Astrocyte of the cerebellum (primary cell): ENCODE measurements at regions of chr22 and their contacts with region 1.

Region 1: DNA sequence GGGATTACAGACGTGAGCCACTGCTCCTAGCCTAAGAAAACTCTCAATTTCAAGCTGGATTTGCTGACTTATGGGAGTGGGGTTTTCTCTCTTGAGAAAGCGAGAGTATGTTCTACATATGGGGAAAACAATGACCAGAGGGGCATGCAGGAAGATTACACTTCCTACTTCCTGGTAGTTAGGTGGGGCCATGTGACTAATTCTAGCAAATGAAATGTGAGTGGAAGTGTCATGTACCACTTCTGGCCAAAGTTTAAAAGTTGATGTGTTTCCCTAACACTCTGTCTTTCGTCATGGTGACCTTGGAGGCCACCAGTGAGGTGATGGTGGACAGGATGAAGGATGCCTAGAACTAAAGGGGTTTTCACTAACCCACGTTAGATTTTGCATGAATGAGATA is 50.5 kb downstream of the PARVG start:
- DNase-seq: no peak
- H3K4me3 ChIP-seq: no peak overlapping the region
- CTCF ChIP-seq: no peak

Region 2: DNA sequence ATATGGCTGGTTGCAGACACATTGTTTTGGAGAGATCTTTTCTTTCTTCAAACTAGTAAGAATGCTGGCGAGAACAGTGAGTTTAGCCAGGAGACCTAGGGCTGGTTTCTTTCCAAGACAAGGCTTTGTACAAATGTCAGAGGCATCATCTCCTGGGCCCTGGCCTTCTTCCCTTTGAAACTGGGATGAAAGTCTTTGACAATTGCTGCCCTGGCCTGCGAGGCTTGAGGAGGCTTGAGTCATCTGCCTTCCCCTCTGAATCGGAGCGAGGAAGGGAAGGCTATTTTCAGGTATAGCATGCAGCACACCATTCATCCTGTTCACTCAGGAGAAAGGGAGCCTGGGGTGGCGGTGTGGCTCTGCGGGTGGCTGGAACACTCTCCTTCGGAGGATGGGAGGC is 72.0 kb before region 1 on chr22:
- in situ Hi-C with region 1: loop called (anchors 5 kb)
- DNase-seq: peak; percentile 44
- H3K4me3 ChIP-seq: no peak overlapping the region
- CTCF ChIP-seq: no peak

Region 3: GRCh38 chr22:44180706-44181032 is 50.6 kb before region 1 on chr22 and contains the start of gene PARVG:
- in situ Hi-C with region 1: no loop called
- DNase-seq: no peak
- H3K4me3 ChIP-seq: no peak within 1 kb of the TSS
- CTCF ChIP-seq: no peak

Region 4: GRCh38 chr22:44272401-44272771 is 41.2 kb after region 1 on chr22:
- in situ Hi-C with region 1: no loop called
- DNase-seq: no peak
- H3K4me3 ChIP-seq: no peak overlapping the region
- CTCF ChIP-seq: no peak